CD8-positive, alpha-beta memory T cell (primary cell): ENCODE measurements at regions of chr11 and their contacts with region 1.

Region 1: GRCh38 chr11:33329705-33330329 is 72.6 kb downstream of the HIPK3 start:
- DNase-seq: peak in 3 of 5 donors; percentile 24 to 60 (median 35)
- H3K4me3 ChIP-seq: no peak overlapping the region
- H3K4me3 Mint-ChIP-seq: no peak overlapping the region
- H3K27ac ChIP-seq: no peak overlapping the region
- H3K27ac Mint-ChIP-seq: peak overlapping the region in 4 of 8 donors; percentile 26 to 76 (median 45)
- H3K4me1 ChIP-seq: no peaks in the 10 kb centered on the region
- H3K4me1 Mint-ChIP-seq: peaks cover 24 to 50% (median 50%) of the 10 kb centered on the region in 3 donors
- H3K27me3 ChIP-seq: no peaks in the 10 kb centered on the region
- H3K27me3 Mint-ChIP-seq: no peaks in the 10 kb centered on the region

Region 2: GRCh38 chr11:33161120-33162005 is 168.5 kb before region 1 on chr11 and contains the start of gene CSTF3:
- CTCF ChIA-PET with region 1: interaction called, 13 read pairs
- POLR2A ChIA-PET with region 1: no interaction called
- DNase-seq: peak; percentile 89 to 98 (median 96)
- H3K4me3 ChIP-seq: peak within 1 kb of the TSS; percentile 97
- H3K4me3 Mint-ChIP-seq: peak within 1 kb of the TSS; percentile 99 to 100 (median 100)
- H3K27ac ChIP-seq: peak within 1 kb of the TSS; percentile 94
- H3K27ac Mint-ChIP-seq: peak within 1 kb of the TSS; percentile 96 to 100 (median 99)
- H3K4me1 ChIP-seq: peaks cover 43% of the 10 kb centered on the region
- H3K4me1 Mint-ChIP-seq: peaks cover 48 to 63% (median 57%) of the 10 kb centered on the region in 3 donors
- H3K27me3 ChIP-seq: no peaks in the 10 kb centered on the region
- H3K27me3 Mint-ChIP-seq: no peaks in the 10 kb centered on the region
- total RNA-seq, gene CSTF3: 35.3 to 37.7 TPM

Region 3: DNA sequence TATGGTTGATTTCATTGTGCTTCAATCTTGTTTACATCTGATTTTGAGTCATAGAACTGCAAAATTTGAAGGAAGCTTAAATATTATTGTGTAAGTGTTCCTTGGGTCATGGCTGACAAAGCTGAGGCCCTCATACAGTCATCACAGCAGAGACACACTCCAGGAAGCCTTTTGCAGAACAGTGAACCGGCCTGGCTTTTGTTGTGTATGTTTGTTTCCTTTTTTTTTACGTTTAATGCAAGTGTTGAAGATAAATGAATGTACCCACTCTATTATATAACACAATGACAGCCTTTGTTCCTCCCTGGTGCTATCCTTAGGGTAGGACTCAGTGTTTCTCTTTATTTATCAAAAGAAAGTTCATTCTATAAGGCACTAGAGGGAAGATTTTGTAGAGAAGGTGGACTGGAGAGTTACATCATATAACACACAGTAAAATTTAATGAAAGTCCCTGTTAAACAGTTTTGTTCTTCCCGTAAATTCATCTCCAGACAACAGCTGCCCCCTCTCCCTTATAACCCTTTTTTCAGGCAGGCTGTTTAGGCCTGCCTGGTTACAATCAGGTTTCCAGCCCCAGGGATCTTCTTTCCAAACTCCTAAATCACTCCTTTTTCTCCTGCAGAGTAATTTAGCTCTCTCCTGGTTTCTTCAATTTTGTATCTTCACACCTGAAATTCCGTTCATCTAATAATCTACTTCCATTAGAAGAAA is 134.2 kb before region 1 on chr11:
- CTCF ChIA-PET with region 1: no interaction called
- POLR2A ChIA-PET with region 1: no interaction called
- DNase-seq: no peak
- H3K4me3 ChIP-seq: no peak overlapping the region
- H3K4me3 Mint-ChIP-seq: no peak overlapping the region
- H3K27ac ChIP-seq: no peak overlapping the region
- H3K27ac Mint-ChIP-seq: no peak overlapping the region
- H3K4me1 ChIP-seq: no peaks in the 10 kb centered on the region
- H3K4me1 Mint-ChIP-seq: no peaks in the 10 kb centered on the region
- H3K27me3 ChIP-seq: no peaks in the 10 kb centered on the region
- H3K27me3 Mint-ChIP-seq: peaks cover 0 to 1% of the 10 kb centered on the region in 2 donors